Activated T-helper 2 cell treated with anti-CD3 and anti-CD28 coated beads, Interferon-gamma antibody, Interleukin-2, Interleukin-4, amounts not matched to agents 10 μg/mL and 5 μg/mL and 100 μg/mL, durations not matched to agents 14 hours and 24 hours and 36 hours (primary cell): ENCODE measurements at regions of chr1 and their contacts with region 1.

Region 1: DNA sequence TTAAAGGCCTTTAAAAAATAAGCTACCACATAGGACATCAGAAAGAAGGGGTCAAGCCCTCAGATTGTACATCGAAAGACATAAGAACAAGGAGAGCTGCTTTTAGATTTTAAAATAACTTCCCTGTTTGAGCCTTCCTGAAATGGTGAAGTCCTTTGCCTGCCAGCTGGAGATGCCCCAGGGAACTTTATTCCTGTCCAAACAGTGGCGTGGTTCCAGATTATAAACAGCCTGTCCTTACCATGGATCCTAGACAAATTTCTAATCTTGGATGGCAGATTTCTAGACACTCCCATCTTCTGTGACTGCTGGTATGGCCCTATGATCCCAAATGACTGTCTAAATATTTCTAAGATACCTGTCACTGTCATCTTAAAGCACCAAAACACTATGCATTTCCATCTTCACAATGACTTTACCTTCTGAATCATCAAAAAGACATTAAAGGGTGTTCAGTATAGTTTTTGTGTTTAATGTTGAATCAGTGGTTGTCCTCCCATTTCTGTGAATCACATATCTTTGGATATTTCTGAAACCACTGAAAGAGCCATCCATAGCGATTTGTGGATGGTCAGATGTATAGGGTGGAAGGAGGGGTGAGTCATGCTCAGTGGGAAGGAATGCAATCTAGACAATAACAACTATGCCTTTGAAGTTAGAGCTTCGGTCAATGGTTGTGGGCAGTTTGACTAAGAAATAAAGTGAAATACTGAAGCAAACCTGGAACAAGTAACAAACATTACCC is 23.2 kb downstream of the ILDR2 start:
- DNase-seq: no peak
- H3K4me3 Mint-ChIP-seq: no peak overlapping the region
- H3K27ac Mint-ChIP-seq: no peak overlapping the region
- H3K4me1 Mint-ChIP-seq: peaks cover 31% of the 10 kb centered on the region
- H3K27me3 Mint-ChIP-seq: peaks cover 21% of the 10 kb centered on the region

Region 2: DNA sequence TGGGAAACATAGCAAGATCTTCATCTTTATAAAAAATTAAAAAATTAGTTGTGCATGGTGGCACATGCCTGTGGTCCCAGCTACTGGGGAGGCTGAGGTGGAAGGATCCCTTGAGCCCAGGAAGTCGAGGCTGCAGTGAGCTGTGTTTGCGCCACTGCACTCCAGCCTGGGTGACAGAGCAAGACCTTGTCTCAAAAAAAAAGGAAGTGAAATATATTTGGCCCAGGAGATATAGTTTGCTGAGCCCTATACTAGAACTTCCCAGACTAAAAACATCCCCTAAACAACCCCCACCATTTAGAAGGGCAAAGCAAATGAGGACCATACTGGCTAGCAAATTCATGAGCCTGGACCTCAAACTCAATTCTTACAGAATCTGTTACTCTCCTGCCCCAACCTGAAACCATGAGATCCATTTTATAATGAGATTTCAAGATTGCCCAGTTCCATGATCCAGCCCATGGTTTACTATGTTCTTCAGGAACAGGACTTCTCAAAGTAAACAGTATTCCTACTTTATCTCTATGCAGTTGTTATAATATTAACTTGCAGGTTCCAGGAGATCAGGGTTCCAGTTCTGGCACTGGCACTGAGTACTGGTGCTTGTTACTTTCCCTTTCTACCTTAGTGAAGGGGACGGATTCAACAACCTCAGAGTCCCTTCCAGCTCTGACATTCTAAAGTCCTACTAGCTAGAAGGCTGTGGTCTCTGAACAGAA is 27.2 kb before region 1 on chr1:
- intact Hi-C with region 1: no loop called
- DNase-seq: no peak
- H3K4me3 Mint-ChIP-seq: no peak overlapping the region
- H3K27ac Mint-ChIP-seq: no peak overlapping the region
- H3K4me1 Mint-ChIP-seq: no peaks in the 10 kb centered on the region
- H3K27me3 Mint-ChIP-seq: peaks cover 21% of the 10 kb centered on the region

Region 3: GRCh38 chr1:166999090-166999489 is 46.9 kb after region 1 on chr1:
- intact Hi-C with region 1: loop called (anchors 1 kb)
- DNase-seq: no peak
- H3K4me3 Mint-ChIP-seq: no peak overlapping the region
- H3K27ac Mint-ChIP-seq: peak overlapping the region; percentile 20
- H3K4me1 Mint-ChIP-seq: peaks cover 16% of the 10 kb centered on the region
- H3K27me3 Mint-ChIP-seq: peaks cover 7% of the 10 kb centered on the region